Tibial artery (tissue), 4 donors: ENCODE measurements at regions of chr7 and their contacts with region 1.

Region 1: DNA sequence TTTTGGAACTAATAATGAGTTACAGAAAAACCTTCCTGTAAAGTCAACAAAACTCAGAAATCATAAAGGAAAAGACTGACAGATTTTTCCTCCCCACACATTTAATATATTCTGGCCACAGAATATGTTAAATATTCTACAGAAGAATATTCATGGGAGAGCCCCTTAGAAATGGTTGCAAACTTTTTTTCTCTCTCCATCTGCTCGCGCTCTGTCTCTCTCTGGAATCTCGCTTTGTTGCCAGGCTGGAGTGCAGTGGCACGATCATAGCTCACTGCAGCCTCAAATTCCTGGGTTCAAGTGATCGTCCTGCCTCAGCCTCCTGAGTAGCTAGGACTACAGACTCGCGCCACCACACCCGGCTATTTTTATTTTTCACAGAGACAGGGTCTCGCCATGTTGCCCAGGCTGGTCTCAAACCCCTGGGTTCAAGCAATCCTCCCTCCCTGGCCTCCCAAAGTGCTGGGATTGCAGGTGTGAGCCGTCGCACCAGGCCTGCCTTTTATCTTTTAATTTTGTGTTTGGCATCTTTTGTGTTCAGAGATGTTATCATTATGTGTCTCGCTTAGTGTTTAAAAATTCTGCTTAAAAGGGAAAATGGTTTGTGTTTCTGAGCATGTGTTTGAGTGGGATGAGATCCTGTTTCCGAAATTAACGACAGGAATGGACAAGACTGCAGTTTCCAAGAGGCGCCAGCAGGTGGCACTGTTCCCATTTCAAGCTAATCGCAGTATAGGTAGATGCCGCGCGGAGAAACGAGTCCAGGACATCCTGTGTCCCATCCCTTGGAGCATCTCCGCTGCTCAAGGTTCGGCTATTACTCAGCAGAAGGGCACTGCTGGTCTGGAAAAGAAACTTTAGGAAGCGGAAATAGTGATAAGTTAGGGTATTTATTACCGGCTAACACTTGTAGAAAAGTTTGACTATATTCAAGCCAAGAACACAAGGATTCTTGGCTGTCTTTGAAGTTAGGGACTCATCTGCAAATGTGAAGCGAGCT is 23.1 kb upstream of the ST7 start:
- DNase-seq: peak; percentile 84 to 87
- H3K4me3 ChIP-seq: no peak overlapping the region
- H3K27ac ChIP-seq: no peak overlapping the region
- H3K4me1 ChIP-seq: peaks cover 0 to 5% (median 1%) of the 10 kb centered on the region in 4 donors
- H3K27me3 ChIP-seq: no peaks in the 10 kb centered on the region
- CTCF ChIP-seq: peak; percentile 91

Region 2: DNA sequence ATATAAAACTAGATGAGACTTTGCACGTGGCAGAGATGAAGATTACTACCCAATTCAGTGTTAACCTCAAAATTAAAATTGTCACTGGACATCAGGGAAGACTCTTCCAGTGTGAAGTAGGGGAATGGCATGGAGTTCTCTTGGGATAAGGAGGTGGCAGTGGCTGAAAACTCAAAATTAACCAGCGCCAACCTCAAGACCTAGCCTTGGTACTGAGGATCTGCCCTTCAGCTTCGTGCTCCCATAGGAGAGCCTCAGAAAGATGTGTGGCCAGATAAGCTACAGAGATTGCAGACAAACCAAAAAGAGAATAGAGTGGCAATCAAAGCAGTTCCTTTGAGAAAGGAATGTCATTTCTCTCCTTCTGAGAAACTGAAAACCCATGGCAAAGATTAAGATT is 115.2 kb before region 1 on chr7:
- intact Hi-C with region 1: no loop called
- DNase-seq: no peak
- H3K4me3 ChIP-seq: no peak overlapping the region
- H3K27ac ChIP-seq: no peak overlapping the region
- H3K4me1 ChIP-seq: peaks cover 0 to 13% (median 4%) of the 10 kb centered on the region in 4 donors
- H3K27me3 ChIP-seq: no peaks in the 10 kb centered on the region
- CTCF ChIP-seq: no peak

Region 3: GRCh38 chr7:116862234-116862950 is 67.8 kb before region 1 on chr7 and contains the start of gene CAPZA2:
- intact Hi-C with region 1: loop called (anchors 10 kb)
- DNase-seq: peak; percentile 86 to 96
- H3K4me3 ChIP-seq: peak within 1 kb of the TSS; percentile 73 to 94
- H3K27ac ChIP-seq: peak within 1 kb of the TSS; percentile 95 to 100
- H3K4me1 ChIP-seq: peaks cover 0 to 42% (median 10%) of the 10 kb centered on the region in 4 donors
- H3K27me3 ChIP-seq: no peaks in the 10 kb centered on the region
- CTCF ChIP-seq: peak; percentile 62 to 95

Region 4: DNA sequence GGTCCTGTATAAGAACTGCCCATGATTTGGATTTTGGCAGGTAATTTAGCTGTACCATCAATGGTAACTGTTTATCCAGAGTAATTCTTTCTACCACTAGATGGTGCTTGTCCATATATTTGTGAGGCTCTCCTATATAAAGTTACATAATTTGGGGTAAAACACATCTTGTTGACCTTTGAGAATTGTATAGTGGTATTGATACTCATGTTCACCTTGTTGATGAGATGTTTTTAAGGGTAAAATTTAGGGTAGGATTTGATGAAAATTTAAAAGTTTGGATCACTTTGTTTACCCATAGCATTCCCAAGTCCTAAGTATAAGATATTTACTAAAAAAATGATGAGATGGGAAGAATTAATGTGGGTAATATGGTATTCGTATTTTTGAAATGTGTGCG is 54.7 kb after region 1 on chr7:
- intact Hi-C with region 1: loop called (anchors 10 kb)
- DNase-seq: no peak
- H3K4me3 ChIP-seq: no peak overlapping the region
- H3K27ac ChIP-seq: no peak overlapping the region
- H3K4me1 ChIP-seq: peaks cover 0 to 3% (median 0%) of the 10 kb centered on the region in 4 donors
- H3K27me3 ChIP-seq: no peaks in the 10 kb centered on the region
- CTCF ChIP-seq: peak; percentile 60 to 69

Region 5: DNA sequence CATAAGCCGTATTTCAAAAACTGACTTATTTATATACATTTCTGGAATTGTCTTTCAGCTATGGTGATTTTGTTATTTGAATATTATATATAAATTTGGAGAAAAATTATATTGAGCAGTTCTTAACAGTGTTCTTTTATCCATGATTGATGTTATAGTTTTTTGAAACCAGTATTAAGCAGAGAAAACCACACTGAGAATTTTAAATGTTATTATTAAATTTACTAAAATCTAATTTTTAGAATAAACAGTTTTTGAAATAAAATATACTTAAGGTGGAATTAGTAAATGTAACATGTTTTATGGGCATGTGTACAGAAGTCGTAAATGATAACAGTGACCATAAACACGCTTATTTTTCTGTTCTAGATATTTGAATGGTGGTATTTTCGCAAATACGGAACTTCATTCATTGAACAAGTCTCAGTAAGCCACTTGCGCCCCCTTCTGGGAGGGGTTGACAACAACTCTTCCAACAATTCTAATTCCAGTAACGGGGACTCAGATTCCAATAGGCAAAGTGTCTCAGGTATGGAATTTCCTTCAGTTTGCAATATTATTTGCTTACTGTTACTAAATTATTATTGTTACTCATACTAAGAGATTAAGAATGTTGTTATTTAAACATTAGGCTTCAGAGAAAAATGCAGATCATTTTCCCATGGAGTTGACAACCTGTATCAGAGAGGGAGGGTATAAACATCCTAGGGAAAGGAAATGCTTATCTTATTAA is 189.1 kb after region 1 on chr7:
- intact Hi-C with region 1: loop called (anchors 5 kb)
- DNase-seq: peak; percentile 86 to 88
- H3K4me3 ChIP-seq: no peak overlapping the region
- H3K27ac ChIP-seq: no peak overlapping the region
- H3K4me1 ChIP-seq: peaks cover 0 to 36% (median 5%) of the 10 kb centered on the region in 4 donors
- H3K27me3 ChIP-seq: no peaks in the 10 kb centered on the region
- CTCF ChIP-seq: peak; percentile 80 to 90

Region 6: DNA sequence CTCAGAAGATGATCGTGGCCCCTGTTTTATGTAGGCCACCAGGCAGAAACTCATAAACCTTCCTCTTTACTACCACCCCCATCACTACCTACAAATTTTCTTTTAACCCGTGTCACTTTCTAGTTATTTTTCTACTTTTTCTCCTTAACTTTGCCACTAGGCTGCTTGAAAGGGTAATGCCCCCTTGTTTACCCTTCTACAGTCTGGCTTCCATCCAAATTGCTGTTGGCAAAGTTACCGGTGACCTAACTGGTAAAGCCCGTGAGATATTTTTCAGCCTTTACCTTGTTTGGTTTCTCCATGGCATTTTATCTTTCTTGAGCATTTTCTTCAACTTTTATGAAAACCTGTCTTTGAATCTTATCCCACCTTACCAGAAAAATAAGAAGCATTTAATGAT is 239.7 kb after region 1 on chr7:
- intact Hi-C with region 1: no loop called
- DNase-seq: no peak
- H3K4me3 ChIP-seq: no peak overlapping the region
- H3K27ac ChIP-seq: peak overlapping the region; percentile 39 to 62
- H3K4me1 ChIP-seq: peaks cover 0 to 44% (median 0%) of the 10 kb centered on the region in 4 donors
- H3K27me3 ChIP-seq: no peaks in the 10 kb centered on the region
- CTCF ChIP-seq: no peak

Region 7: DNA sequence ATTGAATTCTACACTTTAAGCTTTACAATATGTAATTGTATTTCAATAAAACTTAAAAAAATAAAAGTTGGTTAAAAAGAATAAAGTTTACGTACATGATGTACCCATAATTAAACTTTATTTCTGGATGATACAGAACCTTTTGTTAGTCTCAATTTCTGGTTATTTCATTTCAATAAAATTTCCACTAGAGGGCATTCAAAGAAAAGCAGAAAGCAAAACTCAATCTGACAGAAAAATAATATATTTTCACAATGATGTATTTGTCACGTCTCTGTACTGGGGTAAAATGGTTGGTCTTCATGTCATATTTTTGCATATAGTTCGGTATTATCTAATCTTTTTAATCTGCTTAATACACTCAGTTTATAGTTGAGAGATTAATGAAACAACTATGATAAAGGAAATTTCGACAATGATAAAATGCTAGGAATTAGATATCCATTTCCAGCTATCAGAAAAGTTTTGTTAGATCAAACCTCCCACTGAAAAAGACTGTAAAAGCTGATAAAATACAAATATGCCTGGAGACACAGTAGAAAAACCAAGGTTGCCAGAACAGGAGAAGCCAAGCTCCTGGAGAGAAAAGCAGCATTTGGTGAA is 469.7 kb after region 1 on chr7:
- intact Hi-C with region 1: loop called (anchors 5 kb)
- DNase-seq: no peak
- H3K4me3 ChIP-seq: no peak overlapping the region
- H3K27ac ChIP-seq: no peak overlapping the region
- H3K4me1 ChIP-seq: peaks cover 0 to 15% (median 0%) of the 10 kb centered on the region in 4 donors
- H3K27me3 ChIP-seq: no peaks in the 10 kb centered on the region
- CTCF ChIP-seq: peak; percentile 22 to 27

Region 8: GRCh38 chr7:117889611-117890010 is 959.4 kb after region 1 on chr7:
- intact Hi-C with region 1: no loop called
- DNase-seq: no peak
- H3K4me3 ChIP-seq: no peak overlapping the region
- H3K27ac ChIP-seq: no peak overlapping the region
- H3K4me1 ChIP-seq: no peaks in the 10 kb centered on the region
- H3K27me3 ChIP-seq: no peaks in the 10 kb centered on the region
- CTCF ChIP-seq: no peak

Region 9: GRCh38 chr7:118013252-118014010 is 1083.2 kb after region 1 on chr7:
- intact Hi-C with region 1: no loop called
- DNase-seq: no peak
- H3K4me3 ChIP-seq: no peak overlapping the region
- H3K27ac ChIP-seq: no peak overlapping the region
- H3K4me1 ChIP-seq: no peaks in the 10 kb centered on the region
- H3K27me3 ChIP-seq: no peaks in the 10 kb centered on the region
- CTCF ChIP-seq: no peak